ENCODE measurements at regions of chr9 and their contacts with region 1.

Region 1: GRCh38 chr9:128127990-128128835 is 684 bp upstream of the PTGES2 start:
- DNase-seq: peak; percentile 77 to 92
- H3K4me3 ChIP-seq: peak overlapping the region; percentile 86
- H3K27ac ChIP-seq: peak overlapping the region; percentile 66
- H3K4me1 ChIP-seq: peaks cover 22% of the 10 kb centered on the region
- H3K27me3 ChIP-seq: no peaks in the 10 kb centered on the region
- CTCF ChIP-seq: no peak

Region 2: DNA sequence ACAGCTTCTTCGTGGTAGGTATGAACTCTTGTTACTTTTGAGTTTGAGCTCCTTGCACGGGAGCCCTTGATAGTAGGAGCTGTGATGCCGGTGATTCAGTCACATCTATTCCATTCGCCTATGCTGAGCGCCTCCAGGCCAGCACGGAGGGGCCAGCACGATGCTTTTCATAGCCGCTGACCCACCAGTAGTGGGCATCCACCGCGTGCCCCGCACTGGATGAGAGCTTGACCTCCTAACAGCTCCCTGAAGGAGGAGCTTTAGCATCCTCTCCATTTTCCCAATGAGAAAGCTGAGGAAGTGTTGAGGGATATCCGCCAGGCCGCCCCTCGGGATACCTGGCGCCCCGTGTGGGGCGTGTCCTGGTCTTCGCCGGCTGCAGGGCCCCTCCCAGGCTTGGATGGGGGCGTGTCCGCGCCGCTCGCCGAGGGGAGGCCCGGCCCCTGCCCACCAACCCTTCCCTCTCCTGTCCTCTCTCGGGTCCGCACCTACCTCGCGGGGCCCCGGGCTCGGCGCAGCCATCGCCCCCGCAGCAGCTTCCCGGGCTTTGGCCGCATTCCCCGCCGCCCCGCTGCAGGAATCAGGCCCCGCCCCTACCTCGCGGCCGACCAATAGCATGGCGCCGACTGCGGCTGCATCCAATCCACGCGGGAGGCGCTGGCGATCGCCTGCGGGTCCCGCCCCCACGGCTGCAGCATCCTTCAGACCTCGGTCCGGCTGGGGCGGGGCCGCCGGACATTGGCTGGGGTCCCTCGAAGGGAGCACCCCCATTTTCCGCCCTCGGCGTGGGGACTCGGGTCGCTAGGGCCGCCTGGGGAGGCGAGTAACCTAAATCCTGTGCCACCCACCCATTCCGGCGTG is 197.8 kb before region 1 on chr9 and contains the start of gene PIP5KL1:
- CTCF ChIA-PET with region 1: interaction called, 3 read pairs
- POLR2A ChIA-PET with region 1: interaction called, 12 read pairs
- intact Hi-C with region 1: no loop called
- DNase-seq: peak; percentile 68 to 91
- H3K4me3 ChIP-seq: peak within 1 kb of the TSS; percentile 58
- H3K27ac ChIP-seq: no peak within 1 kb of the TSS
- H3K4me1 ChIP-seq: peaks cover 37% of the 10 kb centered on the region
- H3K27me3 ChIP-seq: no peaks in the 10 kb centered on the region
- CTCF ChIP-seq: no peak
- total RNA-seq, gene PIP5KL1: 21.9 and 22.5 TPM in 2 replicates

Region 3: GRCh38 chr9:128072144-128073021 is 55.8 kb before region 1 on chr9:
- CTCF ChIA-PET with region 1: no interaction called
- POLR2A ChIA-PET with region 1: no interaction called
- intact Hi-C with region 1: no loop called
- DNase-seq: peak; percentile 77 to 79
- H3K4me3 ChIP-seq: no peak overlapping the region; the same call in 1 of the 2 replicates
- H3K27ac ChIP-seq: peak overlapping the region; percentile 63
- H3K4me1 ChIP-seq: peaks cover 39% of the 10 kb centered on the region
- H3K27me3 ChIP-seq: no peaks in the 10 kb centered on the region
- CTCF ChIP-seq: no peak

Region 4: DNA sequence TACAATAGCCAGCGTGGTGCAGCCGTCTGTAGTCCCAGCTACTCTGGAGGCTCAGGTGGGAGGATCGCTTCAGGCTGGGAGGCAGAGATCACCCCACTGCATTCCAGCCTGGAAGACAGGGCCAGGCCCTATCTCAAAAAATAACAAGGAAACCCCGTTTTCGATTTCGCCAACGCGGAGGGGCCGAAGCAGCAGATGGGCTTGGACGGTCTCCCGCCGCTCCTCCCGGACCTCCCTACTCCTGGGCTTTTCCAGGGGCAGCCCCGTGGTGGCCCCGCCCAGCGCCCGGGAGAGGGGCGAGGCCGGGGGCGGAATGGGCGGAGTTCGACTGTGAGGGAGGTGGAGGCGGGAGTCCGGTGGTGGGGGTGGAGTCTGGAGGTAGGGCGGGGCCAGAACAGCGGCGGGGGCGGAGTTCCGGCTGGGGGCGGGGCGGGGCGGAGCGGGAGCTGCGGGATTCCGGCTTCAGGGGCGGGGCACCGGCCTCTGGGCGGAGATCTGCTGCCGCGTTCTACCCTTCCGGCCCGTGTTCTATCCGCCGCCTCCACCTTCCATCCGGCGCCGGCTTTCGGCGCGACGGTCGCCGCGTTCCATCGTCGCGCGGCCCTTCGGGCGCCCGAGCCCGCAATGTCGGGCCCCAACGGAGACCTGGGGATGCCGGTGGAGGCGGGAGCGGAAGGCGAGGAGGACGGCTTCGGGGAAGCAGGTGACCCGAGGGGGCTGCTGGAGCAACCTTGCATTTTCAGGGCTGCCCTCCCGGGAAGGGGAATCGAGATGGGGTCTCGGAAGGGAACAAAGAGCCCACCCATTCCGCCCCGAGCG is 31.8 kb after region 1 on chr9 and contains the start of gene BBLN:
- CTCF ChIA-PET with region 1: no interaction called
- POLR2A ChIA-PET with region 1: interaction called, 3 read pairs
- intact Hi-C with region 1: loop called (anchors 1 kb)
- DNase-seq: peak; percentile 75 to 99
- H3K4me3 ChIP-seq: peak within 1 kb of the TSS; percentile 90
- H3K27ac ChIP-seq: peak within 1 kb of the TSS; percentile 69
- H3K4me1 ChIP-seq: 0 out of 2 replicates have a peak, but pooled peaks cover 9% of the 10 kb centered on the region
- H3K27me3 ChIP-seq: no peaks in the 10 kb centered on the region
- CTCF ChIP-seq: no peak
- total RNA-seq, gene BBLN: 154 and 213 TPM in 2 replicates

Region 5: GRCh38 chr9:128191406-128192046 is 63.3 kb after region 1 on chr9 and contains the start of gene CIZ1:
- CTCF ChIA-PET with region 1: interaction called, 5 read pairs
- POLR2A ChIA-PET with region 1: interaction called, 3 read pairs
- intact Hi-C with region 1: loop called (anchors 1 kb)
- DNase-seq: peak; percentile 46 to 83
- H3K4me3 ChIP-seq: peak within 1 kb of the TSS; percentile 83
- H3K27ac ChIP-seq: peak within 1 kb of the TSS; percentile 77
- H3K4me1 ChIP-seq: peaks cover 16% of the 10 kb centered on the region
- H3K27me3 ChIP-seq: no peaks in the 10 kb centered on the region
- CTCF ChIP-seq: peak; percentile 65
- total RNA-seq, gene CIZ1: 164 and 213 TPM in 2 replicates

Region 6: GRCh38 chr9:128275996-128276573 is 147.9 kb after region 1 on chr9 and contains the starts of genes GOLGA2 and SWI5:
- CTCF ChIA-PET with region 1: no interaction called
- POLR2A ChIA-PET with region 1: no interaction called
- intact Hi-C with region 1: loop called (anchors 5 kb)
- DNase-seq: peak; percentile 95 to 100
- H3K4me3 ChIP-seq: peak within 1 kb of the TSS; percentile 65
- H3K27ac ChIP-seq: peak within 1 kb of the TSS; percentile 51; the same call in 1 of the 2 replicates
- H3K4me1 ChIP-seq: peaks cover 36% of the 10 kb centered on the region
- H3K27me3 ChIP-seq: no peaks in the 10 kb centered on the region
- CTCF ChIP-seq: no peak
- total RNA-seq, gene GOLGA2: 175 and 188 TPM in 2 replicates
- total RNA-seq, gene SWI5: 70.4 and 86.0 TPM in 2 replicates

Region 7: DNA sequence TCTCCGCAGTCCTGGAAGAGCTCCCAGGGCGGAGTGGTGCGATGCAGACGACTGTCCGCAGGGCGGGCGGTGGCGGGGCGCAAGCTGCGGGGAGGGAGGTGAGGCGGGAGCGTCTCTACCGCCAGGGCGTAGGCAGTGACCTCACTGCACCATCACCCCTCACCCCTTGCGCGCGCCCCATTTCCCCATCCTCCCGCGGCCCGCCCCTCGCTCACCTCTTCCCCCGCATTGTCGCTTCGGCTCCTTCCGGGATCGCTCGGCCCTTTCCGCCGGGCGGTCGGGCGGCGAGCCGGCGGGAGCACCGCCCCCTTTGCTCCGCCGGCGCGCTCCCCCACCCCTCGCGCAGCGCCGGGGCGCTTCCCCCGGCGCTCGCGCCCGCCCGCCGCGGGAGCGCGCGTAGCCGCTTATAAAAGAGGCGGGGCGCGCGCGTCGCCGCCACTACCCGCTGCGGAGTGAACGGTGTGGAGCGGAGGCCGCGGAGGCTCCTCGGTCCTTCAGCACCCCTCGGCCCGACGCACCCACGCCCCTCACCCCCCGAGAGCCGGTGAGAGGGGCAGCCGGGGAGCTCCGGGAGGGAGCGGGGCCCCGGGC is 424.0 kb after region 1 on chr9 and contains the start of gene SPTAN1:
- CTCF ChIA-PET with region 1: no interaction called
- POLR2A ChIA-PET with region 1: no interaction called
- intact Hi-C with region 1: loop called (anchors 5 kb)
- DNase-seq: peak; percentile 56 to 91
- H3K4me3 ChIP-seq: peak within 1 kb of the TSS; percentile 75
- H3K27ac ChIP-seq: peak within 1 kb of the TSS; percentile 32; the same call in 1 of the 2 replicates
- H3K4me1 ChIP-seq: peaks cover 39% of the 10 kb centered on the region
- H3K27me3 ChIP-seq: no peaks in the 10 kb centered on the region
- CTCF ChIP-seq: no peak
- total RNA-seq, gene SPTAN1: 214 and 239 TPM in 2 replicates